Posterior vena cava (tissue), 2 donors: ENCODE measurements at regions of chr3 and their contacts with region 1.

Region 1: DNA sequence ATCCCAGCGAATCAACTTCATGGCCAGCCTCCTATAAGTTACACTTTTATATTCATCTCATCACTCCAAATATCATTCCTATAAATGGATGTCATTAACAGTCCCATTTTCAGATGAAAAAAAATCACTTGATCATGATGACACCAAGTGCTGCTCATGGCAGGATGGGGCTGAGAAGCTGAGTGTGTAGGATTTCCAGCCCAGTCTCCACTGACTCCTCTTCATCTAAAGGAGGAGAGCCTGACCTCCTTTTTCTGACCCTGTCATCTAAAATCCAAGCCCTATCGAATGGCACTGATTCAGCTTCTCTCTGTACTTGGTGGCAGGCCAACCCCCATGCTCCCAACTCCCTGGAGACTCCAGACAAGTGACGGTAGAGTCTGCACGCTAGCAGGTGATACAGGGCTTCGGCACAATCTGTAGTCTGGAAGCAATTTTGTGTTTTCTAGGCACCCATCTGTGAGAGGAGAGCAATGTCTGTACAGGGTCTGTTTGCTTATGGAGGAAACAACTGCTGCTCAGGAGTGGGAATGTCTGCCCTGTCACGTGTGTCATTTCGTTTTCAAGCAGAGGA is 103.2 kb downstream of the EPHB1 start:
- DNase-seq: no peak

Region 2: GRCh38 chr3:134846911-134847317 is 51.4 kb before region 1 on chr3:
- intact Hi-C with region 1: loop called in 1 of 2 experiments (anchors 5 kb)
- DNase-seq: no peak

Region 3: DNA sequence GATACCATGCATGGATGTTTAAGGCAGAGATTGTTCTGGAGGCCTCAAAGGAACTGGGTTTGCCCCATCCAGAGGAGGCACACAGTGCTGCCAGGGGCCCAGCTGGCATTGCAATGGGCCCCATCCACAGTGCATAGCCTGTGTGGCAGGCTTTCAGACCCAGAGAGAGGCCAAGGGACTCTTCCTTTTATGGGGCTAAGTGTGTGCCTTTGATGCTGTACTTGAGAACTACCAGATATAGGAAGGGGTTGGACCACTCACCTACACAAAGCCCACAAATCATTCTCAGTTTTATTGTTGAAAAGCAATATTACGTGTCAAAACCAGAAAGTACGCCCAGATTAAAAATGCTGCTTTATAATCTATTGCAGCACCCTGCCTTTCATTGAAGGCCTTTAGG is 31.7 kb after region 1 on chr3:
- intact Hi-C with region 1: loop called in 1 of 2 experiments (anchors 1 kb)
- DNase-seq: no peak

Region 4: DNA sequence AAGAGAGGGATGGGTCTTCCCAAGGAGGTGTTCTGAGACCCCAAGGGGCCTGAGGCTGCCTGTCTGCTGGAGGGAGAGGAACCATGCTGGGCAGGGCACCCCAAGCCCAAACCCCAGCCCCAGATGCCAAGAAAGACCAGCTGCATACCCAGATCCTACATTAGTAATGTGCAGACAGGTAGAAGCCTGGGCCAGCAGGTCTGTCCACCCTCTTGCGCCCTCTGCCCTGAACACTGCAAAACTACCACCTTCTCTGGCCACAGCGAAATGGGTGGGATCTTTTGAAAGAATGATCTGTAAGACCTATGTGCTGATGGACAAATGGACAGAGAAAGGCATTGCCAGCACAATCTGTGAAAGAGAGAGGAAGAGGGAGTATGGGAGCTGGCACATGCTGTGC is 180.0 kb after region 1 on chr3:
- intact Hi-C with region 1: no loop called
- DNase-seq: no peak